HAP-1 (cell line): ENCODE measurements at regions of chrX and their contacts with region 1.

Region 1: DNA sequence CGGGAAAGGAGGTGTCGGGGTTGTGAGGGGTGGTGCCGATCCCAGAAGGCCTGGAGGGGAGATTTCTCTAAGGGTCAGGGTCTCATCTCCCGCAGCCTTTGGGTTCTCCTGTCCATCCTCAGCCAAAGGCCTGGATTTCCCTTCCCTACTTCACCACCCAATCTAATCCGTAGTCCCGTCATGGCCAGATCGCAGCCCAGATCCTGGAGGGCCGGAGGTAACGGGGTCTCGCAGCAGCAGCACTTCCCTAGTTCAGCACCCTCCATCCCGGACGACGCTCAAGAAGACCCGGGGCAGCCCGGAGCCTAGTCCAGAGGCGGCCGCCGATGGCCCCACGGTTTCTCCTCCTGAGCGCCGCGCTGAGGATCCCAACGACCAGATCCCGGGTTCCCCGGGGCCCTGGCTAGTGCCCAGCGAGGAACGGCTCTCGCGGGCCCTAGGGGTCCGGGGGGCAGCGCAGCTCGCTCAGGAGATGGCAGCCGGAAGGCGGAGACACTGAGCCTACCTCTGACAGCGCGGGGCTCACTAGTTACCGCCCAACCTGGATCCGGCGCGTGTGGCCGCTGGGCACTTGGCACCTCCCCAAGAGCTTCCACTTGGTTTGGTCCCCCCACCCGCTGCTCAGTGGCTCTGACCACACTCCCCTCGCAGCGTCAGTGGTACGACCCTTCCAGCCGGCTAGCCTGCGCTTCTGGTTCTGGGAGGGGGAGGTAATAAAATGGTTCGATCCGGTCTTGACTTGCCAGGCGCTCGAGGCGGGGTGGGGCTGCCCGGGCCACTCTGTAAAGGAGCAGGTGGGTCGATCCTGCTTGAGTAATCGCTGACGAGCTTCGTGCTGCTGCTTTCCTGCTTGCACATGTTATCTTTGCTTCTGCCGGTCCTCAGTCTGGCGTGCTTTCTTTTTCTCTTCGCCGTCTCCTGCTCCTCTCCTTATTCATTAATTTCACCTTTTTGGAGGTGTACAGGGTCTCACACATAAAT is 3.6 kb downstream of the MAGIX start:
- DNase-seq: peak; percentile 95 to 98
- H3K4me3 ChIP-seq: peak overlapping the region; percentile 29
- H3K4me1 ChIP-seq: peaks cover 29% of the 10 kb centered on the region
- H3K27me3 ChIP-seq: no peaks in the 10 kb centered on the region

Region 2: DNA sequence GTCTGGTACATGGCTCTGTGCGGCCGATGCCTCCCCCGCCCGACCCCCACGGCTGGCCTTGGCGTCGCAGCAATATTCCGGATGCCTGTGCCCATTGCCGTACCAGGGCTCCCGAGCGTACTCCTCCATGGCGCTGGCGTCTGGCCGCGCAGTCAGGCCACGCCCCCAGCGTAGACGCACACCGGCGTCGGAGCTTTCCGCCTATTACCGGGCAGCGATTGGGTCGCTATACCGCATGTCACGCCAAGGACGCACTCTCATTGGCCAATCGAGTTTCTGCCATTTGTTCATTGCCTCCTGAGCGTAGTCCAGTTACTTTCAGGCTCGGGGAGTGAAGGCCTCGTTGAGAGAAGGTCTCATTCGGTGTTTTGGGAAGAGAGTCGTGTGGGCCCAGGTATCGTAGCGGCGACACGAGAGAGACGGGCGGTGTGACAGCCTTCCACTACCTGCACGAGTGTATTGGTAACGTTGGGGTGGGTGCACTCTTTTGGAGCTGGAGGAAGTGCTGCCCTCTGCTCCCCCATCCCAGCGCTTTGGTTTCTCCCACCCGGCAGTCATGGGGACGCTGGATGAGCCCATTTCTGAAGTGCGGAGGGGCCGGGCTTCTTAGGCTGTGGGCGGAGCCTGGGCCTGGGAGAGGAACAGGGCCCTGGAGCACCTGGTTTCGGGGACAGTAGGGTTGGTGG is 268.4 kb before region 1 on chrX and contains the starts of genes PQBP1 and TIMM17B:
- in situ Hi-C with region 1: loop called (anchors 5 kb)
- DNase-seq: peak; percentile 96 to 98
- H3K4me3 ChIP-seq: peak within 1 kb of the TSS; percentile 73
- H3K4me1 ChIP-seq: peaks cover 5% of the 10 kb centered on the region
- H3K27me3 ChIP-seq: no peaks in the 10 kb centered on the region